ENCODE measurements at regions of chr4 and their contacts with region 1.

Region 1: GRCh38 chr4:88514557-88515511 is 8.7 kb downstream of the PYURF start:
- DNase-seq: no peak
- H3K4me3 ChIP-seq: no peak overlapping the region
- H3K4me3 Mint-ChIP-seq: no peak overlapping the region
- H3K27ac ChIP-seq: no peak overlapping the region
- H3K27ac Mint-ChIP-seq: peak overlapping the region in 1 of 8 donors; percentile 12
- H3K4me1 ChIP-seq: no peaks in the 10 kb centered on the region
- H3K4me1 Mint-ChIP-seq: no peaks in the 10 kb centered on the region
- H3K27me3 ChIP-seq: no peaks in the 10 kb centered on the region
- H3K27me3 Mint-ChIP-seq: peaks cover 3 to 4% of the 10 kb centered on the region in 2 donors

Region 2: DNA sequence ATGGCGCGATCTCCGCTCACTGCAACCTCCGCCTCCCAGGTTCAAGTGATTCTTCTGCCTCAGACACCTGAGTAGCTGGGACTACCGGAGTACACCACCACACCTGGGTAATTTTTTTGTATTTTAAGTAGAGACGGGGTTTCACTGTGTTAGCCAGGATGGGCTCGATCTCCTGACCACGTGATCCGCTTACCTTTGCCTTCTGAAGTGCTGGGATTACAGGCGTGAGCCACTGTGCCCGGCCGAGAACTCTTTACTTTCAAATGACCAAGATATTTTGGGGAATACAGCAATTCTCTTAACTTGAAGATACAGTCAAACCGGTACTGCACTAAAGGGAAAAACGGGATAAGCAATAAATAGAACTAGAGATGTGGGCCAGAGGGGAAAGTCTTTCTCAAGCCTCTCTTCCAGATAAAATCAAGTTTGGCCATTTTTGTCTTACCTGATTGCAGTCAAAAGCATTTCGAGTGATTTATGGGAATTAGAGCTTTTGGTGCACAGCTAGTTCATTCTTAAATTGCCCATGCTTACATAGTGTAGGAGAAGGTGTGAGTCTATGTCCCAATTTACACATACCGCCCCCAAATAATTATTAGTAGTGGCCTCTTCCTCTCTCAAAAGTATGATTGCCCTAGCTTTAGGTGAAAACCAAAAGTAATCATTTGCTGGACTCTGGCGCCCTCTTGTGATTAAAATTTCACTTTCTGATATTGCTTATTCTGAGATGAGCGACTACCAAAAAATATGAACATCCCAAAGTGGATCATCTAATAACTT is 303.2 kb before region 1 on chr4:
- CTCF ChIA-PET with region 1: interaction called, 93 read pairs
- POLR2A ChIA-PET with region 1: no interaction called
- DNase-seq: peak in 4 of 5 donors; percentile 28 to 49 (median 44)
- H3K4me3 ChIP-seq: no peak overlapping the region
- H3K4me3 Mint-ChIP-seq: no peak overlapping the region
- H3K27ac ChIP-seq: no peak overlapping the region
- H3K27ac Mint-ChIP-seq: no peak overlapping the region
- H3K4me1 ChIP-seq: no peaks in the 10 kb centered on the region
- H3K4me1 Mint-ChIP-seq: peaks cover 0 to 6% (median 0%) of the 10 kb centered on the region in 3 donors
- H3K27me3 ChIP-seq: no peaks in the 10 kb centered on the region
- H3K27me3 Mint-ChIP-seq: peaks cover 2 to 4% of the 10 kb centered on the region in 2 donors

Region 3: DNA sequence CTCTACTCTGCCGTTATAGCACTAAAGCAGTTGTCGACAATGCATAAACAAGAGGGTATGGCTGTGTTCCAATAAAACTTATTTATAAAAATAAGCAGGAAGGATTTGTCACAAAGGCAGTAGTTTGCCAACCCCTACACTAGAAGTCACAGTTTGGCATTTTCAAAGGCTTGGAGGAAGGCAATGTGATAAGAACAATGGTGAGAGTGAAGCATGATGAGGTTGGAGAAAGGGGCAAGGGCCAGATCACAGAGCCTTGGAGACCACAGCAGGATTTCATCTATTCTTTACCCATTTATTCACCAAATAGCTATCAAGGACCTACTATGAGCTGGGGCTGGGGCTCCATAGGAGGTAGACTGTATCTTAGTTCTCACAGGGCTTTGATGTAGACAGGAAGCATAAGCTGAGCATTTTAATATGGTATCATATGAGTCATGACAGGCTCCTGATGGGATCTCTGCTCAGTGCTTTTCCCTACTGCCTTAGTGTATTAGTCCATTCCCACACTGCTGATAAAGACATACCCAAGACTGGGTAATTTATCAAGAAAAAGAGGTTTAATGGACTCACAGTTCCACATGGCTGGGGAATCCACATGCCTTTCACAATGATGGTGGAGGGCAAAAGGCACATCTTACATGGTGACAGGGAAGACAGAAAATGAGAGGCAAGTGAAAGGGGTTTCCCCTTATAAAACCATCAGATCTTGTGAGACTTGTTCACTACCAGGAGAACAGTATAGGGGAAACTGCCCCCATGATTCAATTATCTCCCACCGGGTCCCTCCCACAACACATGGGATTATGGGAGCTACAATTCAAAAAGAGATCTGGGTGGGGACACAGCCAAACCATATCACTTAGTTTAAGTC is 289.4 kb before region 1 on chr4:
- CTCF ChIA-PET with region 1: interaction called, 21 read pairs
- POLR2A ChIA-PET with region 1: no interaction called
- DNase-seq: no peak
- H3K4me3 ChIP-seq: no peak overlapping the region
- H3K4me3 Mint-ChIP-seq: no peak overlapping the region
- H3K27ac ChIP-seq: no peak overlapping the region
- H3K27ac Mint-ChIP-seq: peak overlapping the region in 1 of 8 donors; percentile 39
- H3K4me1 ChIP-seq: no peaks in the 10 kb centered on the region
- H3K4me1 Mint-ChIP-seq: peaks cover 2 to 3% (median 2%) of the 10 kb centered on the region in 3 donors
- H3K27me3 ChIP-seq: no peaks in the 10 kb centered on the region
- H3K27me3 Mint-ChIP-seq: peaks cover 0 to 3% of the 10 kb centered on the region in 2 donors

Region 4: DNA sequence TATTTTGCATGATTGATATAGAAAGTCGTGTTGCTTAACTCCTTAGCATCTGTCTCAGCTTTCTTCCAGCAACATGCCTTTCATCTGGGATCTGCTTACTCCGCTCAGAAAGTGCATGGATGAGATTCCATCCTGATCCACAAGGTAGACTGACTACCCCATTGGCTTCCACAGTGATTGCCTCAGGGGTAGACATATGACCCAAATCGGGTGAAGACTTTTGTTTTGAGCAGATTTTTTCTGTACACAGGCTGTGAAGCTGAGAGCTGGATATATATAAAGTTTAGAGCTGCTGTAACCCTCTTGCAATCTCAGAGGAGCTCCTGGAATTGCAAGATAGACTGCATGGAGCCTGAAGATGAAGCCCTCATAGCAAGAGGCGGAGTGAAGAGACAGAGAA is 144.9 kb before region 1 on chr4:
- CTCF ChIA-PET with region 1: interaction called, 11 read pairs
- POLR2A ChIA-PET with region 1: no interaction called
- DNase-seq: no peak
- H3K4me3 ChIP-seq: no peak overlapping the region
- H3K4me3 Mint-ChIP-seq: no peak overlapping the region
- H3K27ac ChIP-seq: no peak overlapping the region
- H3K27ac Mint-ChIP-seq: no peak overlapping the region
- H3K4me1 ChIP-seq: no peaks in the 10 kb centered on the region
- H3K4me1 Mint-ChIP-seq: peaks cover 0 to 2% (median 2%) of the 10 kb centered on the region in 3 donors
- H3K27me3 ChIP-seq: no peaks in the 10 kb centered on the region
- H3K27me3 Mint-ChIP-seq: peaks cover 0 to 2% of the 10 kb centered on the region in 2 donors

Measured in CD8-positive, alpha-beta memory T cell (primary cell).